Endothelial cell of umbilical vein (primary cell): ENCODE measurements at regions of chr10 and their contacts with region 1.

Region 1: DNA sequence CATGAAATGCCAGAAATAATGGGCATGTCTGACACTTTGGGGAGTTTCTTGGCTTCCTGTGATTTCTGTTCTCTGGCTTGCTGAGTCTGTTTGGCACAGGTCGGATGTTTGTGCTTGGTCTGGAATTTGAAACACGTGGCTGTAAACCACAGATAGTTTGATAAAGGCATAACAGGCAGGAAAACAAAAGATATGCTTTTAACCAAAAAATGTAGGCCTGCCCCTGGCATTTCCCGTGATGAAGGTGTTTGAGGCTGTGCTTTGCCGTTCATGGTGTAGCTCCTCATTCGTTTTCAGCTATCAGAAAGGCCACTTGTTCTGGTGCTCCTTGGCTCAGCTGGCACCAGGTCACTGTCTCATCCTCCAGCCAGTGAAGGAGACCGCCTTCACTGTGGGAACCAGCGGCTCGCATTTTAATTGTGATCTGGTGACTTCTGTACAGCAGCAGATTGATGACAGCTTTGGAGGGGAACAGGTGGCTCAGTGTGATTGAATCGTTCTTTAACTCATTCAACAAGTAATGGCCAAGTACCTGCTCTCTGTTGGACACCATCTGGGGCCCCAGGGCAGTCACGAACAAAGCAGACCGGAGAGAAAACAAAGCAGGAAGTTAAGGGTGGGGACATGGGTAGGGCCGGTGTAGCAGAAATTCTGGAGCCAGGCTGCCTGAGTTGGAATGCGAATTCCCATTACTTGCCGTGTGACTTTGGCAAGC is 111.5 kb downstream of the CCNY start:
- DNase-seq: peak; percentile 81
- H3K4me3 ChIP-seq: peak overlapping the region in 1 of 3 experiments; percentile 34
- H3K27ac ChIP-seq: peak overlapping the region; percentile 97
- H3K4me1 ChIP-seq: peaks cover 61% of the 10 kb centered on the region
- H3K27me3 ChIP-seq: no peaks in the 10 kb centered on the region
- CTCF ChIP-seq: no peak
- POLR2A ChIP-seq: no peak

Region 2: GRCh38 chr10:35336084-35336831 is 111.6 kb before region 1 on chr10 and contains the start of gene CCNY:
- CTCF ChIA-PET with region 1: no interaction called
- POLR2A ChIA-PET with region 1: no interaction called
- dilution Hi-C with region 1: no loop called
- intact Hi-C with region 1: loop called (anchors 5 kb)
- DNase-seq: peak; percentile 67
- H3K4me3 ChIP-seq: peak within 1 kb of the TSS; percentile 72 to 97 (median 94)
- H3K27ac ChIP-seq: peak within 1 kb of the TSS; percentile 63
- H3K4me1 ChIP-seq: peaks cover 45% of the 10 kb centered on the region
- H3K27me3 ChIP-seq: no peaks in the 10 kb centered on the region
- CTCF ChIP-seq: no peak
- POLR2A ChIP-seq: peak; percentile 62
- total RNA-seq, gene CCNY: 99.3 and 107 TPM in 2 replicates

Region 3: GRCh38 chr10:35379226-35380137 is 68.4 kb before region 1 on chr10:
- CTCF ChIA-PET with region 1: interaction called, 3 read pairs
- POLR2A ChIA-PET with region 1: no interaction called
- dilution Hi-C with region 1: no loop called
- intact Hi-C with region 1: loop called (anchors 1 kb)
- DNase-seq: peak; percentile 99
- H3K4me3 ChIP-seq: peak overlapping the region in 1 of 3 experiments; percentile 41
- H3K27ac ChIP-seq: peak overlapping the region; percentile 97
- H3K4me1 ChIP-seq: peaks cover 51% of the 10 kb centered on the region
- H3K27me3 ChIP-seq: no peaks in the 10 kb centered on the region
- CTCF ChIP-seq: peak; percentile 7 to 16
- POLR2A ChIP-seq: no peak

Region 4: DNA sequence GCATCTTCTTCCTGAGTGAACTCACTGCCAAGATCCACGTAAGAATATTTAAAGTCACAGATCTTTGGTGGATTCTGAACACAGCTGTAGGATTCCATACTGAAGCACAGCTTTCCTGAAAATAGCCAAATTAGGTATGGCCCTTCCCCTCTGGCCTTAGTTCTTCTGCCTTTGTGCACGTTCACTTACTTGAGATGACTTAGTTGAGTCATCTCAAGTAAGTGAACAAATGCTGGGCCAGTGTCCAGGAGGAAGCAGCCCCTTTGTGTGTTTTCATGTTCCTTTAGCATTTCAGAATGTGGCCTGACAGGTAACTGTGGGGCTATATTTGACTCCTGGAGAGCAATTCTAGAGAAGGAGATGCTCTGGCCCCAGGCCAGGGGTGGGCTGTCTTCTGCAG is 60.1 kb before region 1 on chr10:
- CTCF ChIA-PET with region 1: no interaction called
- POLR2A ChIA-PET with region 1: interaction called, 3 read pairs
- dilution Hi-C with region 1: no loop called
- intact Hi-C with region 1: loop called (anchors 2 kb)
- DNase-seq: peak; percentile 67
- H3K4me3 ChIP-seq: no peak overlapping the region
- H3K27ac ChIP-seq: no peak overlapping the region
- H3K4me1 ChIP-seq: peaks cover 24% of the 10 kb centered on the region
- H3K27me3 ChIP-seq: no peaks in the 10 kb centered on the region
- CTCF ChIP-seq: no peak
- POLR2A ChIP-seq: no peak

Region 5: DNA sequence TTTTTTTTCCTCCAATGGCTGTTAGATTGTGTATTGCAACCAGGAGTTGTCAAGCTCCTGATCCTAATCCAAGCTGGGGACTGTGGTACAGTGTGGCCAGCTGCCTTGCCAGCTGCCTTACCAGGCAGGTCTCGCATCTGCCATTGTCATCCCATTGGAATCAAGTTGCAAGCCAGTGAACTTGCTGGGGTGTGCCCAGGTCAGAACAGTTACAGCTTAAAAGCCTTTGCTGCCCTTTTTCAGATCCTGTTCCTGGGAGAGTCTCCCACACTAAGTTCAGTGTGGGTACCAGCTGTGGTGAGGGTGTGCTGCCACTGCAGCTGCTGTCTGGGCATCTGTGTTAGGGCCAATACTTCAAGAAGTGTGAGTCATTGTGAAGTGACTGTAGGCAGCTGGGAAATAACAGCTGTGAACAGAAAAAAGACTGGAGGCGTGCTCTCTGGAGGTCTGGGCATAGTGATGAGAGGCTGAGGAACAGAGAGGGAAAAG is 38.7 kb before region 1 on chr10:
- CTCF ChIA-PET with region 1: no interaction called
- POLR2A ChIA-PET with region 1: no interaction called
- dilution Hi-C with region 1: no loop called
- intact Hi-C with region 1: loop called (anchors 5 kb)
- DNase-seq: peak; percentile 77
- H3K4me3 ChIP-seq: no peak overlapping the region
- H3K27ac ChIP-seq: peak overlapping the region; percentile 38
- H3K4me1 ChIP-seq: peaks cover 32% of the 10 kb centered on the region
- H3K27me3 ChIP-seq: no peaks in the 10 kb centered on the region
- CTCF ChIP-seq: no peak
- POLR2A ChIP-seq: no peak

Region 6: GRCh38 chr10:35421553-35422178 is 26.2 kb before region 1 on chr10:
- CTCF ChIA-PET with region 1: interaction called, 6 read pairs
- POLR2A ChIA-PET with region 1: interaction called, 3 read pairs
- dilution Hi-C with region 1: no loop called
- intact Hi-C with region 1: loop called (anchors 1 kb)
- DNase-seq: peak; percentile 92
- H3K4me3 ChIP-seq: no peak overlapping the region
- H3K27ac ChIP-seq: peak overlapping the region; percentile 96
- H3K4me1 ChIP-seq: peaks cover 73% of the 10 kb centered on the region
- H3K27me3 ChIP-seq: no peaks in the 10 kb centered on the region
- CTCF ChIP-seq: no peak
- POLR2A ChIP-seq: peak; percentile 50

Region 7: GRCh38 chr10:35433851-35434426 is 13.9 kb before region 1 on chr10:
- CTCF ChIA-PET with region 1: no interaction called
- POLR2A ChIA-PET with region 1: no interaction called
- dilution Hi-C with region 1: no loop called
- intact Hi-C with region 1: no loop called
- DNase-seq: no peak
- H3K4me3 ChIP-seq: no peak overlapping the region
- H3K27ac ChIP-seq: no peak overlapping the region
- H3K4me1 ChIP-seq: peaks cover 7% of the 10 kb centered on the region
- H3K27me3 ChIP-seq: no peaks in the 10 kb centered on the region
- CTCF ChIP-seq: no peak
- POLR2A ChIP-seq: no peak

Region 8: GRCh38 chr10:35462491-35462934 is 14.7 kb after region 1 on chr10:
- CTCF ChIA-PET with region 1: interaction called, 3 read pairs
- POLR2A ChIA-PET with region 1: no interaction called
- dilution Hi-C with region 1: no loop called
- intact Hi-C with region 1: loop called (anchors 1 kb)
- DNase-seq: no peak
- H3K4me3 ChIP-seq: no peak overlapping the region
- H3K27ac ChIP-seq: peak overlapping the region; percentile 32
- H3K4me1 ChIP-seq: peaks cover 25% of the 10 kb centered on the region
- H3K27me3 ChIP-seq: no peaks in the 10 kb centered on the region
- CTCF ChIP-seq: no peak
- POLR2A ChIP-seq: no peak